PC-9 (cell line): ENCODE measurements at regions of chr17 and their contacts with region 1.

Region 1: GRCh38 chr17:32319548-32319905 is 22.4 kb downstream of the C17orf75 start:
- DNase-seq: peak in 1 of 2 experiments; percentile 73
- H3K4me3 ChIP-seq: no peak overlapping the region
- H3K27ac ChIP-seq: no peak overlapping the region
- H3K4me1 ChIP-seq: no peaks in the 10 kb centered on the region; the same call in 1 of the 2 replicates
- H3K27me3 ChIP-seq: peaks cover 15% of the 10 kb centered on the region
- CTCF ChIP-seq: peak; percentile 91

Region 2: GRCh38 chr17:31413874-31414549 is 905.5 kb before region 1 on chr17:
- CTCF ChIA-PET with region 1: no interaction called
- POLR2A ChIA-PET with region 1: no interaction called
- intact Hi-C with region 1: no loop called
- DNase-seq: no peak
- H3K4me3 ChIP-seq: no peak overlapping the region
- H3K27ac ChIP-seq: no peak overlapping the region
- H3K4me1 ChIP-seq: no peaks in the 10 kb centered on the region
- H3K27me3 ChIP-seq: peaks cover 25% of the 10 kb centered on the region
- CTCF ChIP-seq: no peak

Region 3: DNA sequence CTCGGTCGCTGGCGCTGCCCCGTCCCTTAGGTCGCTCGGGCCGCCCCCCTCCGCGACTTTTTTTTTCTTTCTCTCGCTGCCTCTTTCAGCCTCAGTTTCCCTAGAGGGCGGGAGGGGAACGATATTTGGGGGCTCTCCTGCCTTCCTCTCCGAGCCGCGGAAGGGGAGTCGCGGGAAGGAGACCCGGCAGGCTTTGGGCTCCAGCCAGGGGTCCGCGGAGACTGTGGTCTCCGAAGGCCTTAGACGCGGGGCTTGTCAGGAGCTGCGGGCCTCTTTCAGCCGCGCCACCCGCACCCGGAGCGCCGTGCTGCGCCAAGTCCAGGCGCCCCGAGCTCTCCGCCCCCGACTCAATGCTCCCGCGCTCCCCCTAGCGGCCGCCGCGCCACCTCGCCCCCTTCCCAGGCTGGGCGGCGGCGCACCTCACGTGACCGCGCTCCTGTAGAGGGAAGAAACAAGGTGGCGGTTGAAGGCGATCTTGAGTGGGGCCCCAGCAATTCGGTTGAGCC is 312.5 kb before region 1 on chr17 and contains the start of gene LRRC37B:
- CTCF ChIA-PET with region 1: interaction called, 12 read pairs
- POLR2A ChIA-PET with region 1: no interaction called
- intact Hi-C with region 1: no loop called
- DNase-seq: peak; percentile 54 to 82
- H3K4me3 ChIP-seq: peak within 1 kb of the TSS; percentile 86
- H3K27ac ChIP-seq: no peak within 1 kb of the TSS
- H3K4me1 ChIP-seq: peaks cover 9% of the 10 kb centered on the region; the same call in 1 of the 2 replicates
- H3K27me3 ChIP-seq: no peaks in the 10 kb centered on the region
- CTCF ChIP-seq: peak; percentile 89
- total RNA-seq, gene LRRC37B: 13.8 and 15.8 TPM in 2 replicates

Region 4: DNA sequence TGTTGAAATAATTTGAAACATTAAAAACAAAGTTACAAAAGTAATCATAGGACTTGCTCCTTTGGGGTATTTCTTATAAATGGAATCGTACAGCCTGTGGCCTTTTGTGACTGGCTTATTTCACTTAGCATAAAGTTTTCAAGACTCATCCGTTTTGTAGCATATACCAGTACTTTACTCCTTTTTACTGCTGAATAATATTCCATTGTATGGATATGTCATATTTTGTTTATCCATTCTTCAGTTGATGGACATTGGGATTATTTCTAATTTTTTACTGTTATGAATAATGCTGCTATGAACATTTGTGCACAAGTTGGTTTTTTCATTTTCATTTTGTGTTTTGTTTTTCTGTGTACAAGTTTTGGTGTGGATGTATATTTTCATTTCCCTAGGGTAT is 83.9 kb before region 1 on chr17:
- CTCF ChIA-PET with region 1: no interaction called
- POLR2A ChIA-PET with region 1: no interaction called
- intact Hi-C with region 1: no loop called
- DNase-seq: no peak
- H3K4me3 ChIP-seq: no peak overlapping the region
- H3K27ac ChIP-seq: no peak overlapping the region
- H3K4me1 ChIP-seq: no peaks in the 10 kb centered on the region
- H3K27me3 ChIP-seq: no peaks in the 10 kb centered on the region
- CTCF ChIP-seq: no peak

Region 5: GRCh38 chr17:32253117-32253611 is 66.4 kb before region 1 on chr17:
- CTCF ChIA-PET with region 1: interaction called, 4 read pairs
- POLR2A ChIA-PET with region 1: no interaction called
- intact Hi-C with region 1: loop called (anchors 1 kb)
- DNase-seq: peak; percentile 50 to 77
- H3K4me3 ChIP-seq: no peak overlapping the region
- H3K27ac ChIP-seq: no peak overlapping the region
- H3K4me1 ChIP-seq: no peaks in the 10 kb centered on the region
- H3K27me3 ChIP-seq: no peaks in the 10 kb centered on the region
- CTCF ChIP-seq: peak; percentile 95

Region 6: DNA sequence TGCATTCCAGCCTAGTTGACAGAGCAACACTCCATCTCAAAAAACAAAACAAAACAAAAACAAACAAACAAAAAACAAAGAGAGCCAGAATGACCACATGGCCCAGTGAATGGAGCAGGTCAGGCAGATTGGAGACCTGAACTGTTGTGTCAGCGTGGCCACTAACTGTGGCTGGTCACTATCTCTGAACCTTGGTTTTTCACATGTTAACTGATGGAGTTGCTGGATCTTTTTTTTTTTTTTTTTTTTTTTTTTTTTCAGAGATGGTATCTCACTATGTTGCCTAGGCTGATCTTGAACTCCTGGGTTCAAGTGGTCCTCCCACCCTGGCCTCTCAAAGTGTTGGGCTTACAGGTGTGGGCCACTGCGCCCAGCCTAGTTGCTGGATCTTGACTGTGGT is 22.1 kb before region 1 on chr17:
- CTCF ChIA-PET with region 1: no interaction called
- POLR2A ChIA-PET with region 1: no interaction called
- intact Hi-C with region 1: no loop called
- DNase-seq: no peak
- H3K4me3 ChIP-seq: no peak overlapping the region
- H3K27ac ChIP-seq: no peak overlapping the region
- H3K4me1 ChIP-seq: no peaks in the 10 kb centered on the region
- H3K27me3 ChIP-seq: 0 out of 2 replicates have a peak, but pooled peaks cover 6% of the 10 kb centered on the region
- CTCF ChIP-seq: no peak